CD4-positive, alpha-beta memory T cell (primary cell): ENCODE measurements at regions of chr7 and their contacts with region 1.

Region 1: GRCh38 chr7:156816943-156817572 is 75.9 kb downstream of the LMBR1 start:
- DNase-seq: peak in 2 of 5 donors; percentile 4 to 14
- H3K4me3 ChIP-seq: no peak overlapping the region
- H3K4me3 Mint-ChIP-seq: peak overlapping the region in 1 of 8 donors; percentile 31
- H3K27ac ChIP-seq: no peak overlapping the region
- H3K27ac Mint-ChIP-seq: peak overlapping the region in 1 of 7 donors; percentile 49
- H3K4me1 ChIP-seq: no peaks in the 10 kb centered on the region
- H3K4me1 Mint-ChIP-seq: peaks cover 0 to 3% (median 0%) of the 10 kb centered on the region in 4 donors
- H3K27me3 ChIP-seq: no peaks in the 10 kb centered on the region
- H3K27me3 Mint-ChIP-seq: no peaks in the 10 kb centered on the region

Region 2: DNA sequence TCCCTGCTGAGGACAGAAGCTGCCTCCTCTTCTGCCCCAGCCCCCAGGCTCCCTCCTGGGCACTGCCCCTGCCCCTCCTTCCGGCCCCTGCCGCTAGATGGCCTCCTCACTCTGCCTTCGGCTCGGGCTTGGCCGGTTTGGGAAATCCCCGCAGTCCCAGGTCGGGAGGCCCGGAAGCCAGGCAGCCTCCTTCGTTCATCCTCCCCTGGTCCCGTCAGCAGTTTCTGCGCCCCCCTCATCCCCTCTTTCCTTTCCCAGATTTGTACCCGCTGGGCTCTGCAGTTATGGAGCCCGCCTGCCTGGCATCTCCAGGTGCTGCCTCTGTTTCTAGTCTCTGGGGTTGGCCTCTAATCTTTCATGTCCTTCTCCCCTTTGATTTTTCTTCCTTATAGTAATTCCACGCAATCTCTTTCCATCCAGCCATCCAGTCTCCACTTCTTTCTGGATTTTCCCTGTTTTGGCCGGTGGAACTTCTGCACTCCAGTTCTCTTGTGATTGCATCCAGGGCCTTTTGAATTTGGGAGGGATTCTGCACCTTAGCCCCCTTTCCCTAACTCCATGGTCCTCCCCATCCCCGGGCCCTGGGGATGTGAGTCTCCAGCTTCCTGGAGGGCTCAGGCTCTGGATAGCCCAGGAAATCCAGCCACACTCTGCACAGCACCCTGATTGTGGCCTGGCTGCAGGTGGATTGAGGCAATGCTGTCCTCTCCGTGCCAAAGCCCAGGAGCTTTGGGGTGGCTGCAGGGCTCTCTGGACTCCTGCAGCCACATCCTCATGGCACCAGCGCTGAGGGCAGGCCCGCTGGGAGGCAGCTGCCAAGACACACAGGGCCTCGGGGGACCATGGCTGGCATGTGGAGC is 1001.5 kb before region 1 on chr7:
- CTCF ChIA-PET with region 1: no interaction called
- POLR2A ChIA-PET with region 1: no interaction called
- intact Hi-C with region 1: loop called (anchors 2 kb)
- DNase-seq: peak; percentile 5 to 39 (median 31)
- H3K4me3 ChIP-seq: no peak overlapping the region
- H3K4me3 Mint-ChIP-seq: peak overlapping the region in 4 of 8 donors; percentile 13 to 74 (median 50)
- H3K27ac ChIP-seq: no peak overlapping the region
- H3K27ac Mint-ChIP-seq: peak overlapping the region in 1 of 7 donors; percentile 52
- H3K4me1 ChIP-seq: no peaks in the 10 kb centered on the region
- H3K4me1 Mint-ChIP-seq: peaks cover 9 to 23% (median 16%) of the 10 kb centered on the region in 4 donors
- H3K27me3 ChIP-seq: peaks cover 9% of the 10 kb centered on the region
- H3K27me3 Mint-ChIP-seq: peaks cover 32 to 42% of the 10 kb centered on the region in 2 donors

Region 3: DNA sequence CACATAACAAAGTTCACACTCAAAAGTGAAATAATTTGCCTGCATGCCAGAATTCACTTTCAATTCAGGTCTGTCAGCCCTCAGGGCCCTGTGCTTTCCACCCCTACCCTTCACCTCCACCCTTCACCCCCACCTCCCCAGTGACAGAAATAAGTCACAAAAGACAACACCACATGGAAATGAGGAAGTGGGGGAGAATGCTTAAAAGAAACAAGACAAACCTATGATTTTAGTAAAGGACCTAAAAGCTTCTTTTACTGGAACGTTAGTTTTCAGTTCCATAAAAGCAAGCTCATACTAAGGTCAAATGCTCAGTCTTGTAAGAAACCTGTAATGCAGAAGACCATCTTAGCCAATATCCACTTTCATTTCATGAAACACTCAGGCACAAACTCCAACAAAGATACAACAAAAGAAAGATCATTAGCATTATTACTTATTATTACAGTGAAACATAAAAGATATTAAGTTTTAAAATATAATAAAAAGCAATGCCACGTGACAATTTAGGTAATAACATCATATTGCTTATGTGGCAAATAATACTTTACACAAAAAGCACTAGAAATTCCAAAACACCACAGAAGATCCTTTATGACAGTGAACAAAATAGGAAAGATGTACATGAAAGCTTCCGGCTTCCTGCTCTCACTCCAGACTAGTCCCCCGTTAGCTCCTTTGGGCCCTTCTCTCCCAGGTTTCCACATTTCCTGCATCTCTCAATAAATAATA is 36.2 kb before region 1 on chr7:
- CTCF ChIA-PET with region 1: no interaction called
- POLR2A ChIA-PET with region 1: no interaction called
- intact Hi-C with region 1: no loop called
- DNase-seq: no peak
- H3K4me3 ChIP-seq: no peak overlapping the region
- H3K4me3 Mint-ChIP-seq: no peak overlapping the region
- H3K27ac ChIP-seq: no peak overlapping the region
- H3K27ac Mint-ChIP-seq: peak overlapping the region in 2 of 7 donors; percentile 10 to 31
- H3K4me1 ChIP-seq: no peaks in the 10 kb centered on the region
- H3K4me1 Mint-ChIP-seq: peaks cover 10 to 18% (median 14%) of the 10 kb centered on the region in 4 donors
- H3K27me3 ChIP-seq: no peaks in the 10 kb centered on the region
- H3K27me3 Mint-ChIP-seq: no peaks in the 10 kb centered on the region

Region 4: DNA sequence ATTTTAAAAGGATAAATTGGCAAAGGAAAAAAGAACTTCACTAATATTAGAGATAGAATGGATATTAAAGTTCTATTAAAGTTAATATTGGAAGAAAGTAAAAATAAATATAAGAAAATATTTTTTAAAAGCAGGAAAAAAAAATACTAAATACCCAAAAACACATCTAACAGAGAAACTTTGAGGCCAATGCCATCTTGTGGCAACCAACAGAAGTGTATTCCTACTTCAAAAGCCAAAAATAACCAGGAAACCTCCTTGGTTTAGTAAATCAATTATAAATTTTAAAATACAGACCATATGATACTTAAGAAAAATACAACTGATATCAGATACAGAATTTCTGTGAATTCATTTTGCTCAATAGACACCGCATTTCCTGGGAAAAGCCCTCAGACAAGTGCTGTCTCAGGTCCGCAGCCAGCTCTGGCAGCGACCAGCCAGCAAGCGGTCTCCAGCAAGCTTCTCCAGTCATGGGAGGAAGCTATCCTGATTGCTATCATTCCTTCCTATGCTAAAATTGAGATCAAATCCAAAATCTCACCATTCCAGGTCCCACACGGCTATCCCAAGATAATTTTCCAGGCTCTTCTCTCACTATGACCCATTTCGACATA is 10.6 kb after region 1 on chr7:
- CTCF ChIA-PET with region 1: no interaction called
- POLR2A ChIA-PET with region 1: no interaction called
- intact Hi-C with region 1: no loop called
- DNase-seq: peak in 3 of 5 donors; percentile 6 to 8 (median 7)
- H3K4me3 ChIP-seq: no peak overlapping the region
- H3K4me3 Mint-ChIP-seq: no peak overlapping the region
- H3K27ac ChIP-seq: no peak overlapping the region
- H3K27ac Mint-ChIP-seq: peak overlapping the region in 1 of 7 donors; percentile 6
- H3K4me1 ChIP-seq: no peaks in the 10 kb centered on the region
- H3K4me1 Mint-ChIP-seq: peaks cover 0 to 4% (median 3%) of the 10 kb centered on the region in 4 donors
- H3K27me3 ChIP-seq: no peaks in the 10 kb centered on the region
- H3K27me3 Mint-ChIP-seq: no peaks in the 10 kb centered on the region